GM12878 (cell line): ENCODE measurements at regions of chr3 and their contacts with region 1.

Region 1: GRCh38 chr3:119279101-119279554 is 15.1 kb upstream of the ARHGAP31 start:
- DNase-seq: no peak
- ATAC-seq: no peak; the same call in 2 of the 3 replicates
- H3K4me3 ChIP-seq: no peak overlapping the region
- H3K27ac ChIP-seq: no peak overlapping the region
- H3K4me1 ChIP-seq: no peaks in the 10 kb centered on the region; the same call in 1 of the 2 replicates
- H3K27me3 ChIP-seq: no peaks in the 10 kb centered on the region
- CTCF ChIP-seq: no peak
- EP300 ChIP-seq: no peak
- POLR2A ChIP-seq: no peak
- RAD21 ChIP-seq: no peak

Region 2: DNA sequence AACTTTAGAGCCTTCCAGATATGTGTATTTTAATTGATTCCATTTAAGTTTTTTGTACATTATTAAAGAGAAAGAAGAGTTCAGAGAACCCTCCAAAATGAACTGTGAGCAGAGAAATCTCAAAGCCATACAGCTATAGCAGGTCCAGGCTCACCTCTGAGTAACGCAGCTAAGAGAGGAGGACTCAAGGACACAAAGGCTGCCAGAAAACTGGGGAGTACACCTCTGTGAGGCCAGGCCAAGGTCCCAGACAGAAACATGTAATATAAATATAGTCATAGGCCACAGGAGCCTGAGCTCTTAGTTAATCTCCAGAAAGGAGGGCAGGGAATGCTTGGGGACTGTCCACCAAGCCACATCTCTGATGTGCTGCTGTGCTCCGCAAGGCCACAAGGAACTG is 117.7 kb after region 1 on chr3:
- CTCF ChIA-PET with region 1: interaction called, 10 read pairs
- POLR2A ChIA-PET with region 1: no interaction called
- RAD21 ChIA-PET with region 1: no interaction called
- SMC1A ChIA-PET with region 1: interaction called, 5 read pairs
- in situ Hi-C with region 1: no loop called
- intact Hi-C with region 1: no loop called
- DNase-seq: no peak
- ATAC-seq: no peak
- H3K4me3 ChIP-seq: no peak overlapping the region
- H3K27ac ChIP-seq: no peak overlapping the region
- H3K4me1 ChIP-seq: peaks cover 44% of the 10 kb centered on the region
- H3K27me3 ChIP-seq: no peaks in the 10 kb centered on the region
- CTCF ChIP-seq: no peak
- EP300 ChIP-seq: no peak
- POLR2A ChIP-seq: no peak
- RAD21 ChIP-seq: no peak

Region 3: DNA sequence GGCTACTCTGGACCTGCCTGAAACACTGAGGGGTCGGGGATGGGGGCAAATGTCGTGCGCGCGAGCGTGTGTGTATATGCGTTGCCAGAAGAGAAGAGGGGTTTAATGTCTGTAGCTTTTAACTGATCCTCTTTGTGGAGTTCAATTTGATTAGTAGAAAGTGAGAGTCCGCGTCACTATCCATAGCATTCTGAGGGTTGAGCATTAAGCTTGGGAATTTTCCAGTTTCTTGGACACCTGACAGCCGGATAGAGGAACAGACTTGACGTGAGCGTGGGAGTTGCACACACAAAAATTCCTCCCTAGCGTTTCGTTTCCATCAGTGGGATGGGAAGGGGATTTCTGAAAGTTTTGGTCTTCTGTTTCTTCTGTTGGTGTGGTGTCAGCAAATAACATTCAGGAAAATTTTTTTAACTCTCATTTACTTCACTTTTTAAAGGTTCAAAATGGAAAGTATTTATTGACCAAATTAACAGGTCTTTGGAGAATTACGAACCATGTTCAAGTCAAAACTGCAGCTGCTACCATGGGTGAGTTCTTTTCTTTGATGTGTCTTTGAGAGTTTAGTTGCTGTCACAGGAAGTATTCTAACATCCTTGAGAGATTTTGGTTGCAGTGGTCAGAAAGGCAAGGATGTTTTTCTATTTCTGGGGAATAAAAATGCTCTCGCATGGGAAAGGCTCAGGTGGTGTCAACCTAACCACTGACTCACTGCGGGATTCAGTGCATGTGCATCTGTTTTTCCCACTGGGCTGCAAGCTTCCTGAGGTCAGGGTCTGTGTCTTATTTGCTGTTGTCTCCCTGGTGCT is 190.5 kb after region 1 on chr3:
- CTCF ChIA-PET with region 1: interaction called, 10 read pairs
- POLR2A ChIA-PET with region 1: no interaction called
- RAD21 ChIA-PET with region 1: interaction called, 5 read pairs
- SMC1A ChIA-PET with region 1: no interaction called
- in situ Hi-C with region 1: no loop called
- intact Hi-C with region 1: no loop called
- DNase-seq: peak; percentile 25
- ATAC-seq: peak; percentile 74
- H3K4me3 ChIP-seq: peak overlapping the region; percentile 90
- H3K27ac ChIP-seq: peak overlapping the region; percentile 96
- H3K4me1 ChIP-seq: no peaks in the 10 kb centered on the region
- H3K27me3 ChIP-seq: no peaks in the 10 kb centered on the region
- CTCF ChIP-seq: no peak
- EP300 ChIP-seq: 0 out of 4 replicates have a peak, but pooled peaks of 1 of the 2 experiments have one; percentile 14
- POLR2A ChIP-seq: no peak
- RAD21 ChIP-seq: no peak